Kidney (tissue), 22 donors: ENCODE measurements at regions of chr5 and their contacts with region 1.

Region 1: GRCh38 chr5:154072414-154073171 is 33.8 kb downstream of the MFAP3 start:
- DNase-seq: peak; percentile 84 to 91 (median 86)
- H3K4me3 ChIP-seq: no peak overlapping the region
- H3K27ac ChIP-seq: no peak overlapping the region
- H3K4me1 ChIP-seq: no peaks in the 10 kb centered on the region
- H3K27me3 ChIP-seq: no peaks in the 10 kb centered on the region
- CTCF ChIP-seq: peak; percentile 92

Region 2: DNA sequence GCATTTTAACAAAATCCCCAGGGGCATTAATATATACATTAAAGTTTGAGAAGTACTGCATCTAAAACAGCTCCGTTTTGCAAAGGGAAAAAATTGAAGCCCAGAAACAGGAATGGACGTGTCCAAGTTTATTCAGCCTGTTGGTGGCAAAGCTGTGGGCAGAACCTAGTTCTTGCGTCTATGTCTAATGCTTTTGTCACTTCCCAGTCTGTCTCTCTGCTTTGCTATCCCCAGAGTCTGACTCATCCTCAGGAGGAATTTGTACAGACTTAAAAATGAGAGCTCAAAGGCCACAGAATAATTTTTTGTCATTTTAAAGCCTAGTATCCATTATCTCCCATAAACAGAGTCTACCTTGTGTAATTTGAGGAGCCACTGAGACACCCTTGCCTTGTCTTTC is 913.0 kb before region 1 on chr5:
- intact Hi-C with region 1: no loop called
- DNase-seq: no peak
- H3K4me3 ChIP-seq: no peak overlapping the region
- H3K27ac ChIP-seq: no peak overlapping the region
- H3K4me1 ChIP-seq: no peaks in the 10 kb centered on the region
- H3K27me3 ChIP-seq: no peaks in the 10 kb centered on the region
- CTCF ChIP-seq: no peak

Region 3: GRCh38 chr5:154179846-154180710 is 107.5 kb after region 1 on chr5:
- intact Hi-C with region 1: loop called (anchors 10 kb)
- DNase-seq: peak in 3 of 5 donors; percentile 52 to 85 (median 76)
- H3K4me3 ChIP-seq: no peak overlapping the region
- H3K27ac ChIP-seq: no peak overlapping the region
- H3K4me1 ChIP-seq: no peaks in the 10 kb centered on the region
- H3K27me3 ChIP-seq: no peaks in the 10 kb centered on the region
- CTCF ChIP-seq: peak; percentile 79